ENCODE measurements at regions of chr2 and their contacts with region 1.

Region 1: DNA sequence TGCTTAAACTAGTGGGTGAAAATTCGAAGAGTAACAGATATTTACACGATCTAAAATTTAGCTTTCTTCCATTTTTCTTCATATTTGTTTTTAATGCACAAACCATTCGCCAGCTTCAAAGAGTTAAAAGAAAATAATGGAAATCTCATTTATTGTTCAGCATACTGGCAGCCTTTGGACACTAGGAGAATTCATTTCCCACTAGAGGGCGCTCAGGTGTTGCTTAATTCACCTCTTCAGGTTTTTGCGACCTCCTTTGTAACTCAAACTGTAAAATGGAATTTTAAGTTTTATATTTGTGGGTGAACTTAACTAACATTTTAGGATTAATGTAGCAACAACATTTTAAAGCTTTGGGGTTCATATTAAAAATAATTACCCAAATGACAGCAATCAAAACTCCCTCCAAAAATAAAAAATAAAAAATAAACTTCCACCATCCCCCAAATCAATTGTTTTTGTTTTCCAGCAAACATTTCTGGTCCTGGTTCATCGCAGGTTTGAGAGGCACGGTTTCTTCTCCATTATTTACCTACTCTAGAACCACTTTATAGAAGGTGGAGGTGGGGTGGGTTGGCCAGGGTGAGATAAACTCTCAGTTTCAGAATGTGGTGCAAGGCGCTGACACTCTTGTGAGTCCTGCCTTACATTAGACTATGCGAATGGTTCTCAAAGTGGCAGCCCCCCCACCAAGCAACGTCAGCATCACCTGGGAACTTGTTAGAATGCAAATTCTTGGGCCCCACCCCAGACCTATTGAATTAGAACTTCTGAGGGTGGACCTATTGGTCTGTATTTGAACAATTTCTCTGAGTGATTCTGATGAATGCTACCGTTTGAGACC is 24.7 kb upstream of the PNPT1 start:
- DNase-seq: peak; percentile 52 to 79 (median 59)
- H3K4me3 ChIP-seq: no peak overlapping the region
- H3K27ac ChIP-seq: no peak overlapping the region
- H3K4me1 ChIP-seq: no peaks in the 10 kb centered on the region
- H3K27me3 ChIP-seq: no peaks in the 10 kb centered on the region
- CTCF ChIP-seq: peak; percentile 71 to 86 (median 78)
- POLR2A ChIP-seq: no peak

Region 2: GRCh38 chr2:55771612-55772011 is 53.2 kb after region 1 on chr2:
- intact Hi-C with region 1: no loop called
- DNase-seq: no peak
- H3K4me3 ChIP-seq: no peak overlapping the region
- H3K27ac ChIP-seq: no peak overlapping the region
- H3K4me1 ChIP-seq: no peaks in the 10 kb centered on the region
- H3K27me3 ChIP-seq: no peaks in the 10 kb centered on the region
- CTCF ChIP-seq: peak; percentile 56 to 91 (median 69)
- POLR2A ChIP-seq: no peak

Region 3: DNA sequence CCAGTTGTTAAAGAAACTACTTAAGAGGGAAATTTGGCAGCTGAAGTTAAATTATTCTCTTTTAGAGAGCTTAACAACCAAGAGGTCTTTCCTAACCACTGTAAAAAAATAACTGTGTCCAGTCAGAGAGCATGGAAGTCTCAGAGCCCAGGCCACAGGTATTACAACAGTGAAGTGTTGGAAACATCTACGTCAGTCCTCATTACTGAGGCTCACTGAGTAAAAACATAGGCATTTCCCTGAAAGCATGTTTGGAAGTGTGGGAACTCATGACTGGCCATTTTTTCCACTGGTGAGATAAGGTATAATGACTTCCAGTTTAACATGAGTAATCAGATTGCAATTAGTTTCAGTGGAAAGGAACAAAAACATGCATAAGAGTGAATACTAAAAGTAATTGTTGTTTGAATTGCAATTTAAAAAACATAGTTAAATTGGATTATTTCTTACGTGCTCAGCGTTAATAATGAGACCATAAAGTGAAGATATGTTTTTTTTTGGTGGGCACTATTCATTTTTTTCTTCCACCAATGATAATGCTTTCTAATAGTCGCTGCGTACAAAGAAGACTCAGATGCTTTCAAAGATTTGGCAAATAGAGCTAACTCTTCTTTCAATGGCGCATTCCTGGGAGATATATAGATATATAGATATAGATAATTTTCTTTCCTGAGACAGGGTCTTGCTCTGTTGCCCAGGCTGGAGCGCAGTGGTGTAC is 144.4 kb after region 1 on chr2:
- intact Hi-C with region 1: no loop called
- DNase-seq: peak in 6 of 7 donors; percentile 29 to 77 (median 66)
- H3K4me3 ChIP-seq: no peak overlapping the region
- H3K27ac ChIP-seq: peak overlapping the region in 3 of 5 donors; percentile 36 to 74 (median 63)
- H3K4me1 ChIP-seq: peaks cover 7 to 18% of the 10 kb centered on the region in 2 donors
- H3K27me3 ChIP-seq: no peaks in the 10 kb centered on the region
- CTCF ChIP-seq: no peak
- POLR2A ChIP-seq: no peak

Region 4: DNA sequence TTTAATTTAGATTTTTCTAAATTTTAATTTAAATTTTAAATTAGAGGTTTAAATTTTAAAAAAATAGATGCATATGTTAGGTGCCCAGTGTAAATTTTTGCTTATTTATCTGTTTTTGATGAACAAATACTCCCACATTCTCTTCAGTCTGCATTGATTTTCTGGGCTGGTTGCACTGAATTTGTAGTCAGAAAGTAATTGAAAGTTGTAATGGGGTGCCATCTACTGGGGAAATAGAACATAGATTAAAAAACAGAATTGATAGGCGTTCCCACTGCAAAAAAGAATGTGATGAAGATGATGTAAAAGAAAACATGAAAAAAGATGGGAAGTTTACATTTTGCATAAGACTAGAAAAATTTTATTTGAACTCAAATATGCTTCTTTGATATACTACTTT is 413.8 kb after region 1 on chr2:
- intact Hi-C with region 1: loop called (anchors 5 to 10 kb)
- DNase-seq: no peak
- H3K4me3 ChIP-seq: no peak overlapping the region
- H3K27ac ChIP-seq: no peak overlapping the region
- H3K4me1 ChIP-seq: no peaks in the 10 kb centered on the region
- H3K27me3 ChIP-seq: peaks cover 5% of the 10 kb centered on the region
- CTCF ChIP-seq: peak in 5 of 6 experiments; percentile 40 to 69 (median 57)
- POLR2A ChIP-seq: no peak

Measured in adrenal gland (tissue), 19 donors.